Activated T-helper 1 cell treated with anti-CD3 and anti-CD28 coated beads, Interleukin-12 subunit alpha, Interleukin-12 subunit beta, Interleukin-2, Interleukin-4 antibody, amounts not matched to agents 30 ng/mL and 10 ng/mL and 1 ng/mL, durations not matched to agents 14 hours and 24 hours and 36 hours (primary cell): ENCODE measurements at regions of chr16 and their contacts with region 1.

Region 1: GRCh38 chr16:3880623-3881498 is at the start of gene CREBBP:
- DNase-seq: peak; percentile 86
- H3K4me3 Mint-ChIP-seq: peak within 1 kb of the TSS; percentile 87
- H3K27ac Mint-ChIP-seq: peak within 1 kb of the TSS; percentile 85
- H3K4me1 Mint-ChIP-seq: peaks cover 34% of the 10 kb centered on the region
- H3K27me3 Mint-ChIP-seq: peaks cover 3% of the 10 kb centered on the region
- total RNA-seq, gene CREBBP: 49.3 and 50.3 TPM in 2 replicates

Region 2: GRCh38 chr16:3611146-3611975 is 269.5 kb before region 1 on chr16 and contains the start of gene SLX4:
- intact Hi-C with region 1: loop called (anchors 1 kb)
- DNase-seq: peak; percentile 93
- H3K4me3 Mint-ChIP-seq: peak within 1 kb of the TSS; percentile 98
- H3K27ac Mint-ChIP-seq: peak within 1 kb of the TSS; percentile 97
- H3K4me1 Mint-ChIP-seq: peaks cover 52% of the 10 kb centered on the region
- H3K27me3 Mint-ChIP-seq: no peaks in the 10 kb centered on the region
- total RNA-seq, gene SLX4: 10.3 and 10.8 TPM in 2 replicates

Region 3: DNA sequence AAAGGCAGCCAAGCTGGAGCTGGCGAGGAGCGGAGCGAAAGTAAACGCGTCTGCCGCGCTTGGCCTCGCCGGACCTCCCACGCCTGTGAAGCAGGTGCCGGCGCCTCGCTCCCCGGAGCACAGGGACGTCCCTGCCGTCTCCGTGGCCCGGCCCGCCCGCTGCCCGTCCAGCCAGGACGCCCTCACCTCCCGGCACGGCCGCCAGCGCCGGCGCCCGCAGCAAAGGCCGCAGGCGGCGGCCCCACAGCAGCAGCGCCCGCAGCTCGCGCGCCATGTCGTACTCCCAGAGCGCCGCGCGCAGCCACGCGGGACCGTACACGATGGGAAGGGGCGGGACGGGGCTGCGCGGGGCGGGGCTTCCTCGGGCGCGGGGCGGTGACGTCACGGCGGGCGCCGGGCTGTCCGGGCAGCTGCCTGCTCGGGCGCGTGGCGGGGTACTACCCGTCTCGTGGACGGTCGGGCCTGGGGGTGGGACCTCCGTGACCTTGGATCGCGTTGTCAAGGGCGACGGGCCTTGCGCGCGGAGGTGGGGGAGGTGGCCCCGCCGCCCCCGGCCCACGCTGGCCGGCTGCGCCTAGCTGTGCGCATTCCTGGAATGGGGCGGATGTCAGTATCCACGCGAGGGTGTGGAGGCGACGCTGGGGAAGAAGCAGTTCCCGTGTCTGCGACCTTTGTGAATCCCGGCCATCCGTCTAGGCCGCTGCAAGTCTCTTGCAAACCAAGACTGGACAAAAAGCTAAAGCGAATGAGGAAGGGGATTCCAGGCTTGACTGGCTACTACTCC is 163.4 kb before region 1 on chr16 and contains the start of gene TRAP1:
- intact Hi-C with region 1: loop called (anchors 1 kb)
- DNase-seq: peak; percentile 87
- H3K4me3 Mint-ChIP-seq: peak within 1 kb of the TSS; percentile 91
- H3K27ac Mint-ChIP-seq: peak within 1 kb of the TSS; percentile 90
- H3K4me1 Mint-ChIP-seq: peaks cover 33% of the 10 kb centered on the region
- H3K27me3 Mint-ChIP-seq: peaks cover 2% of the 10 kb centered on the region
- total RNA-seq, gene TRAP1: 351 and 353 TPM in 2 replicates

Region 4: GRCh38 chr16:3807425-3808123 is 73.3 kb before region 1 on chr16:
- intact Hi-C with region 1: loop called (anchors 5 kb)
- DNase-seq: no peak
- H3K4me3 Mint-ChIP-seq: peak overlapping the region; percentile 31
- H3K27ac Mint-ChIP-seq: peak overlapping the region; percentile 64
- H3K4me1 Mint-ChIP-seq: peaks cover 79% of the 10 kb centered on the region
- H3K27me3 Mint-ChIP-seq: no peaks in the 10 kb centered on the region

Region 5: DNA sequence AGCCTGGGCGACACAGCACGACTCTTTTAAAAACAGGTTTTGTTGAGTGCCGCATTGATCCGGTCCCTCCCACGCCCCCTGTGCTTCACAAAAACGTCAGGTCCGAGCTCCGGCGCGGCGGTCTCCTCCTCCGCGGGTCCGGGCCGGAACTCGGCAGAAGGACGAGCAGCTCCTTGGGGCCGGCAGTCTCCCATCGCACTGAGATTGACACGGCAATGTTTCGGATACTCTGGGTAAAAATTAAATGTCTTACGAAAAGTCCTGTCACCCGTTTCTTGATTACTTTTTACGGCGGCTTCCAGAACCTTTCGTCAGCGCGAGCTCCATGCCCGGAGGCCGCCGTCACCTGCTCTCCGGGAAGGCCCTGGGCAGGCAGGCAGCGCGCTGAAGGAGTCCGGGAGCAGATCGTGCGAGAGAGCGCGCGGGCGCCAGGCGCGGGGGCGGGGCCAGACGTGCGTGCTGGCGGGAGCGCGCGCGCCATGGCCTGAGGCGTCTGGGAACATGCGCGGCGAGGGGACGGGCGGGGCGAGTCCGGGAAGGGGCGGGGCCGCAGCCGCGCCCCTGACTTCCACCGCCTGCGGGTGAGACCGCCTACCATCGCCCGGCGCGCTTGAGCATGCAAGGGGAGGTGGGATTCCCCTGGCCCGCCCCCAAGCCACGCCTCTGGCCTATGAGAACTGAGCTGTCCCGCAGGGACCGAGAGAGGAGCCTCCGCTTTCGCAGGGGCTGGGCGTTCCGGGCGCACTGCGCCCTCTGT is 372.7 kb after region 1 on chr16:
- intact Hi-C with region 1: loop called (anchors 5 kb)
- DNase-seq: peak; percentile 99
- H3K4me3 Mint-ChIP-seq: peak overlapping the region; percentile 94
- H3K27ac Mint-ChIP-seq: peak overlapping the region; percentile 98
- H3K4me1 Mint-ChIP-seq: peaks cover 4% of the 10 kb centered on the region
- H3K27me3 Mint-ChIP-seq: peaks cover 2% of the 10 kb centered on the region